ENCODE measurements at regions of chr6 and their contacts with region 1.

Region 1: GRCh38 chr6:41367700-41368099 is 32.3 kb downstream of the NCR2 start:
- DNase-seq: peak in 4 of 5 donors; percentile 45 to 50 (median 48)
- ATAC-seq: peak; percentile 40 to 78 (median 76)
- H3K4me3 ChIP-seq: no peak overlapping the region
- H3K27ac ChIP-seq: no peak overlapping the region
- H3K4me1 ChIP-seq: peaks cover 0 to 23% (median 14%) of the 10 kb centered on the region in 12 donors
- H3K27me3 ChIP-seq: peaks cover 6 to 64% (median 29%) of the 10 kb centered on the region in 9 donors
- CTCF ChIP-seq: peak; percentile 23 to 74 (median 60)
- POLR2A ChIP-seq: no peak

Region 2: DNA sequence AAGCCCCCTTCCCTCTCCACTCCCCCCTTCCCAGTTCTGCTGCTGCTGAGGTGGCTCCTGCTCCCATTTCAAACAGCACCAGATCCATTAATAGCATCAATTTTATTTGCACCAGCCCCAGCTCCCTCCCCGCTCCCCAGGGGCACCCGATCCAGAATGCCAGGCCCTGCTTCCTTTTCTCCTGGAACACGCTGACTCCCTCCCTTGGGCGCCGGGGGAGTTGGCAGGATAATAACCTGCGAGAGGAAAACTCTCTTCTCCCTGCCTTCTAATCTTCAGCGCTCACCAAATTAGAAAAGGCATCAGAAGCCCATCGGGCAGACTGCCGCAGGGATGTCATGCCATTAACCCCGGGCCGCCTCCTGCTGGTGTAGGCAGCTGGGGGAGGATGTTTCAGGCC is 45.5 kb after region 1 on chr6:
- intact Hi-C with region 1: loop called in 2 of 10 experiments (anchors 5 kb)
- DNase-seq: peak in 2 of 5 donors; percentile 32 to 59
- ATAC-seq: peak in 3 of 4 donors; percentile 39 to 83 (median 62)
- H3K4me3 ChIP-seq: no peak overlapping the region
- H3K27ac ChIP-seq: no peak overlapping the region
- H3K4me1 ChIP-seq: peaks cover 0 to 6% (median 0%) of the 10 kb centered on the region in 12 donors
- H3K27me3 ChIP-seq: peaks cover 0 to 71% (median 3%) of the 10 kb centered on the region in 9 donors
- CTCF ChIP-seq: peak in 2 of 12 donors; percentile 8 to 15
- POLR2A ChIP-seq: no peak

Region 3: GRCh38 chr6:41449399-41450245 is 81.9 kb after region 1 on chr6:
- intact Hi-C with region 1: loop called in 3 of 10 experiments (anchors 5 to 10 kb)
- DNase-seq: peak in 3 of 5 donors; percentile 49 to 64 (median 61)
- ATAC-seq: peak in 3 of 4 donors; percentile 17 to 38 (median 38)
- H3K4me3 ChIP-seq: no peak overlapping the region
- H3K27ac ChIP-seq: peak overlapping the region in 9 of 12 donors; percentile 76 to 96 (median 87)
- H3K4me1 ChIP-seq: peaks cover 0 to 37% (median 25%) of the 10 kb centered on the region in 12 donors
- H3K27me3 ChIP-seq: no peaks in the 10 kb centered on the region
- CTCF ChIP-seq: no peak
- POLR2A ChIP-seq: no peak

Region 4: GRCh38 chr6:41455818-41456217 is 88.1 kb after region 1 on chr6:
- intact Hi-C with region 1: loop called in 8 of 10 experiments (anchors 1 to 10 kb)
- DNase-seq: no peak
- ATAC-seq: no peak
- H3K4me3 ChIP-seq: no peak overlapping the region
- H3K27ac ChIP-seq: no peak overlapping the region
- H3K4me1 ChIP-seq: peaks cover 0 to 20% (median 14%) of the 10 kb centered on the region in 12 donors
- H3K27me3 ChIP-seq: peaks cover 0 to 9% (median 0%) of the 10 kb centered on the region in 9 donors
- CTCF ChIP-seq: no peak
- POLR2A ChIP-seq: no peak

Region 5: DNA sequence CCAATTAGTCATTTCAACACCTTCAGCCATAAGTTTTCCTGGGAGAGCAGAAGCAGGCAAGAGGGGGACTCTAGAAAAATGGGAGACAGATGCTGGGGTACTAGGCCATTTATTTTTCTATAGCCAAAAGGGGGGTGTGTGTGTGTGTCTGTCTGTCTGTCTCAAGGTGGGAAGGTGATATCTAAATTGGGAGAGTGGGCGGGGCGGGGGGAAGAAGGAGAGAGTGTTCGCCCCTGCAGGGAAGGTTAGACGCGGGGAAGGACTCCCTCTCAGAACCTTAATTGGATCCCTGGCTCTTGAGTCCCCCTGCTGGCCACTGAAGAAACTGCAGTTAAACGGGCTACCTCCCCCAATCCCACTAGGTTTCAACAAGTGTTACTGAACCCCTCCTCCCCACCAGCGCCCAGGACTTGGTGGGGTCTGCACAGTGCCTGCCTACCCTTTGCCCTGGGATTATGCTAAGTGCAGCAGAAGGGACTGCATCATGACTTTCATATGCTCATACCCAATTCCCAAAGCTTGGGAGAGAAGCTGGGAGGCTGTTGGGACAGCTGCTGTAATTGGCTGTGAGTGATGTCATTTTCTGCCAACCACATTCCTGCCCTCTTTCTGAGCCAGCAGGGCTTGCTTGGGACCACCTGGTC is 224.3 kb after region 1 on chr6:
- intact Hi-C with region 1: loop called (anchors 1 to 5 kb)
- DNase-seq: peak in 4 of 5 donors; percentile 58 to 71 (median 64)
- ATAC-seq: peak; percentile 54 to 71 (median 60)
- H3K4me3 ChIP-seq: no peak overlapping the region
- H3K27ac ChIP-seq: no peak overlapping the region
- H3K4me1 ChIP-seq: no peaks in the 10 kb centered on the region
- H3K27me3 ChIP-seq: no peaks in the 10 kb centered on the region
- CTCF ChIP-seq: peak; percentile 80 to 96 (median 91)
- POLR2A ChIP-seq: peak in 1 of 2 donors; percentile 14

Region 6: GRCh38 chr6:41683510-41684310 is 316.0 kb after region 1 on chr6:
- intact Hi-C with region 1: loop called (anchors 1 to 2 kb)
- DNase-seq: peak; percentile 80 to 91 (median 84)
- ATAC-seq: peak; percentile 59 to 82 (median 78)
- H3K4me3 ChIP-seq: peak overlapping the region; percentile 5 to 66 (median 55)
- H3K27ac ChIP-seq: peak overlapping the region; percentile 66 to 91 (median 82)
- H3K4me1 ChIP-seq: peaks cover 0 to 35% (median 20%) of the 10 kb centered on the region in 12 donors
- H3K27me3 ChIP-seq: no peaks in the 10 kb centered on the region
- CTCF ChIP-seq: peak; percentile 86 to 97 (median 93)
- POLR2A ChIP-seq: no peak

Measured in heart left ventricle (tissue), 16 donors.